Gastrocnemius medialis (tissue), 4 donors: ENCODE measurements at regions of chr4 and their contacts with region 1.

Region 1: GRCh38 chr4:128809477-128810330 is at the start of gene JADE1:
- DNase-seq: peak; percentile 79 to 87
- ATAC-seq: peak; percentile 51 to 55
- H3K4me3 ChIP-seq: peak within 1 kb of the TSS; percentile 68 to 97 (median 90)
- H3K27ac ChIP-seq: peak within 1 kb of the TSS; percentile 90 to 95 (median 93)
- H3K4me1 ChIP-seq: peaks cover 7 to 18% of the 10 kb centered on the region in 2 donors
- H3K27me3 ChIP-seq: no peaks in the 10 kb centered on the region
- CTCF ChIP-seq: peak; percentile 25 to 72 (median 62)
- POLR2A ChIP-seq: peak; percentile 57 to 75
- total RNA-seq, gene JADE1: 14.2 to 21.1 (median 14.9) TPM

Region 2: DNA sequence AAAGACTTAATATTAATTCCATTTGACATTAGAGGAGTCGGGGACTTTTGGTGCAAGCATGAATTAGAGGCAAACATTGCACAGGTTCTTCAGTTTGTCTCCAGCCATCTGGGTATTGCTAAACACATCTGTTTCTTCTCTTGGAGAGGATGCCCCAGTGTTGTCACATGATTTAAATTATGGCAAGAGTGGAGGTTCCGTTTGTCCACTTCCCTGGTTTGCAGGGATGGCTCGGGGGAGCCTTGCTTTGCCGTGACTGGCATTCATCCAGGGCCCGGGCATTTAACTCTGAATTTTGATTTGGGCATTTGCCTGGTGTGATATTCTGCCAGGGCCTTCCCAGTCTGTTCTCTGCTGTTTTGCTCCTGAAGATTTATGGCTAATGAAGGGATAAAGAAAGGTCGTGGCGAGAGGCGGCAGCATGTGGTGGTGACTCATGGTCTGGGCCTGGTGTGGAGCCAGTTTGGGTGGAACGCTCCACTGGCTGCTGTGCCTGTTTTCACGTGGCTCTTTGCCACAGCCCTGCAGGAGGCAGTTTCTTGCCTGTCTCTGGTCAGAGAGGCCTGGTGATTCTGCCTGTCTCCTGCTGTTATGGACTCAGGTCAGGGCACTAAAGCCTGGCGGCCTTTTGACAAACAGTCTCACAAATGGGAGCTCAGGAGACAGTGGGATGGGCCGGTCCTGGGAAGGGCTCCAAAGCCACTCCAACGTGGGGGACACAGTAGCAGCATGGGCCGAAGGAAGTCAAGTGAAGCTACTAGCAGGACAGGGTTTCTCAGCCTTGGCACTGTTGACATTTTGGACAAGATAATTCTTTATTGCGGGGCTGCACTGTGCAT is 422.7 kb before region 1 on chr4:
- in situ Hi-C with region 1: no loop called
- intact Hi-C with region 1: loop called (anchors 2 kb)
- DNase-seq: peak; percentile 93 to 97
- ATAC-seq: peak; percentile 92
- H3K4me3 ChIP-seq: peak overlapping the region; percentile 11 to 35 (median 32)
- H3K27ac ChIP-seq: peak overlapping the region; percentile 90 to 92 (median 91)
- H3K4me1 ChIP-seq: peaks cover 32 to 46% of the 10 kb centered on the region in 2 donors
- H3K27me3 ChIP-seq: no peaks in the 10 kb centered on the region
- CTCF ChIP-seq: no peak
- POLR2A ChIP-seq: no peak

Region 3: GRCh38 chr4:128574706-128575105 is 235.0 kb before region 1 on chr4:
- in situ Hi-C with region 1: loop called in 1 of 4 experiments (anchors 25 kb)
- intact Hi-C with region 1: loop called (anchors 5 kb)
- DNase-seq: peak in 1 of 2 donors; percentile 54
- ATAC-seq: peak in 1 of 2 donors; percentile 43
- H3K4me3 ChIP-seq: no peak overlapping the region
- H3K27ac ChIP-seq: no peak overlapping the region
- H3K4me1 ChIP-seq: peaks cover 27 to 32% of the 10 kb centered on the region in 2 donors
- H3K27me3 ChIP-seq: no peaks in the 10 kb centered on the region
- CTCF ChIP-seq: peak; percentile 27 to 56 (median 29)
- POLR2A ChIP-seq: no peak

Region 4: GRCh38 chr4:128635141-128635954 is 174.4 kb before region 1 on chr4:
- in situ Hi-C with region 1: no loop called
- intact Hi-C with region 1: no loop called
- DNase-seq: peak; percentile 31 to 74
- ATAC-seq: peak; percentile 82 to 88
- H3K4me3 ChIP-seq: no peak overlapping the region
- H3K27ac ChIP-seq: peak overlapping the region in 3 of 4 donors; percentile 16 to 49 (median 45)
- H3K4me1 ChIP-seq: peaks cover 0 to 12% of the 10 kb centered on the region in 2 donors
- H3K27me3 ChIP-seq: no peaks in the 10 kb centered on the region
- CTCF ChIP-seq: no peak
- POLR2A ChIP-seq: no peak

Region 5: DNA sequence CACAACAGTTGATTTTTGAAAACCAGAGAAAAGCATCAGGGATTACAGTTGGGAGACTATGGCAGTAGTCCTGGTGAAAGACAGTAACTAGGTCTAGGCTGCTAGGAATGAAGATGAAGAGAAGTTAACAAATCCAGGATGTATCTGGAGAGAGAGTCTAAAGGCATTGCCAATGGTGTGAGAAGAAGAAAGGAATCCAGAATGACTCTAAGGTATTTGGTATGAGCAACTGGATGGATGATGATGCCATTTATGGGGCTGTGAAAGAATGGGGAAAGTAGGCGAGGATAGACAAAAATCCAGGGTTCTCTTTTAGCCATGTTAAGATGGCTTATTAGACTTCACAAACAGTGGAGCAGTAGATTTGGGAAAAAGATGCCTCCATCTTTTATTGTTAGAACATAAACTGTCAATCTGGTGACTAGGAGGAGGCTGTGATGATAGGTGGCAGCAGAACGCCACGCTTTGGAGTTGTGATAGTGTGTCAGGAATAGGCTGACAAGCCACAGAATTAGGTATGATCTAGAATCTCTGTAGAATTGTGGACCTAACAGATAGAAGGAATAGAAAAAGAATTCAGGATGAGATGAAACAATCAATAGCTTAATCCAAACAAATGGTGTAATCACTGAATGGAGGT is 27.5 kb before region 1 on chr4:
- in situ Hi-C with region 1: no loop called
- intact Hi-C with region 1: loop called (anchors 1 kb)
- DNase-seq: peak; percentile 35 to 59
- ATAC-seq: peak; percentile 80 to 84
- H3K4me3 ChIP-seq: no peak overlapping the region
- H3K27ac ChIP-seq: peak overlapping the region in 3 of 4 donors; percentile 41 to 69 (median 43)
- H3K4me1 ChIP-seq: no peaks in the 10 kb centered on the region
- H3K27me3 ChIP-seq: no peaks in the 10 kb centered on the region
- CTCF ChIP-seq: peak in 4 of 5 experiments; percentile 12 to 69 (median 40)
- POLR2A ChIP-seq: no peak

Region 6: GRCh38 chr4:128863312-128864075 is 53.8 kb after region 1 on chr4:
- in situ Hi-C with region 1: no loop called
- intact Hi-C with region 1: loop called (anchors 2 kb)
- DNase-seq: peak; percentile 53 to 61
- ATAC-seq: peak; percentile 70 to 84
- H3K4me3 ChIP-seq: no peak overlapping the region
- H3K27ac ChIP-seq: no peak overlapping the region
- H3K4me1 ChIP-seq: no peaks in the 10 kb centered on the region
- H3K27me3 ChIP-seq: no peaks in the 10 kb centered on the region
- CTCF ChIP-seq: peak; percentile 68 to 91 (median 88)
- POLR2A ChIP-seq: no peak